ENCODE measurements at regions of chr3 and their contacts with region 1.

Region 1: DNA sequence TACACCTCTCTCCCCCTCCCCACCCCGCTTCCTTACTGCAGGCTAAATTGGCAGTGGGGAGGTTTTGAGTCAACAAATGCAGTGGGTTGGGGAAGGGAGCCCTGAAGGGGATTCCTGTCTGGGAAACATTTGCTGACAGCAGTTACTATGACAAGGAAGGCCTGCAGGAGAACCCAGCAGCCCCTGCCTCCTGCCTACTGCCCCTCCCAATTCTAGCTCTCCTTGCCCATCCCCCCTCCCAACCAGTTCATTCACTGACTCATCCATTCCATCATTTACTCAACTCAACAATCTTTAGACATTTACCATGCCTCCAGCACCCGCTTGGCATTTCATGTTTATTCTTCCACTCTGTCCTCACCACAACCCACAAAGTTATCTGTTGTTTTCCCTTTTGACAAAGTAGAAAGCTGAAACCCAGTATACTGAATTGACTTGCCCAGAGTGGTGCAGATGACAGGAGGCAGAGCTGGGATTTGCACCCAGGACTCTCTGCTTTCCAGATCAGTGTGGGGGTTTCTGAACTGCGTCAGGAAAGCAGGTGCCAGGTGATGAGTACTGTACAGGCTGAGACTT is 75.0 kb downstream of the MAGEF1 start:
- DNase-seq: peak; percentile 89
- ATAC-seq: peak; percentile 78
- H3K4me3 ChIP-seq: no peak overlapping the region
- H3K27ac ChIP-seq: peak overlapping the region; percentile 22
- H3K4me1 ChIP-seq: peaks cover 33% of the 10 kb centered on the region
- H3K27me3 ChIP-seq: no peaks in the 10 kb centered on the region
- CTCF ChIP-seq: no peak

Region 2: DNA sequence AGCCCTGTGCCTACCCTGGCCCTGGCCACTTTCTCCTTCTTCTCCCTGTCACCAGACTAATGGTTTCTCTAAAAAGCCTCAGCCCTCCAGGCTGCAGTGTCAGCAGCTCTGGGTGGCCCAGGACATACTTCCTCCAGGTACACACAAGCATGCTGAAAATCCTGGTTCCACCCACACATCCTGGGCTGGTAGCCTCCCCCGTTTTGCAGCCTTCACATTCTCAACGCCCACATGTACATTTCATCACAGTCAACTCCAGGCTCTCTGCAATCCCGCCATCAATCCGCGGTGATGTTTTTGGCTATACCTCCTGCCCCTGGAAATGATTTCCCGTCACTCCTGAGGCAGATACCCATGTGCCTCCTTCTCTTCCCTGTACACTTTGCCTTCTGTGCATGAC is 15.6 kb after region 1 on chr3:
- CTCF ChIA-PET with region 1: no interaction called
- POLR2A ChIA-PET with region 1: no interaction called
- intact Hi-C with region 1: loop called (anchors 1 kb)
- DNase-seq: no peak
- ATAC-seq: 0 out of 2 replicates have a peak, but pooled peaks have one; percentile 13
- H3K4me3 ChIP-seq: no peak overlapping the region
- H3K27ac ChIP-seq: no peak overlapping the region
- H3K4me1 ChIP-seq: peaks cover 10% of the 10 kb centered on the region; the same call in 1 of the 2 replicates
- H3K27me3 ChIP-seq: no peaks in the 10 kb centered on the region
- CTCF ChIP-seq: no peak

Measured in PC-3 (cell line).